Common myeloid progenitor, CD34-positive (primary cell): ENCODE measurements at regions of chr6 and their contacts with region 1.

Region 1: DNA sequence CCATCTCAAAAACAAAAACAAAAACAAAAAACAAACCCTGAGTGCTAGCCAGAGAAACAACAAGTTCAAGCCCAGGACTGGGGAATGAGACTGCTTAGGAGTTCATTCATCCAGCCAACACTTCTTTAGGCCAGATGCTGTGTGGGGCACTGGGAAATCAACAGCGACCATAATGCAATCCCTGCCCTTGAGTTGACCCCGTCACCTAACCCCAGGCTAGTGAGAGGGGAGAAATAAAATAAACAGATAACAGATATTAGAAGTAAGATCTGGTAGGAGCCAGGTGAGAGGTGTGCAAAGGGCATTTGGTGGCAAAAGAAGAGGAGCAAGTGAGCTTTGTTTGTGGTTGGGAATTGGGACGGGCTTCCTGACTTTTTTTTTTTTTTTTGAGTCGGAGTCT is 4.9 kb upstream of the RPL10A start:
- DNase-seq: no peak
- H3K4me3 ChIP-seq: no peak overlapping the region
- H3K27ac ChIP-seq: no peak overlapping the region
- H3K4me1 ChIP-seq: peaks cover 0 to 7% (median 5%) of the 10 kb centered on the region in 4 experiments
- H3K27me3 ChIP-seq: no peaks in the 10 kb centered on the region

Region 2: DNA sequence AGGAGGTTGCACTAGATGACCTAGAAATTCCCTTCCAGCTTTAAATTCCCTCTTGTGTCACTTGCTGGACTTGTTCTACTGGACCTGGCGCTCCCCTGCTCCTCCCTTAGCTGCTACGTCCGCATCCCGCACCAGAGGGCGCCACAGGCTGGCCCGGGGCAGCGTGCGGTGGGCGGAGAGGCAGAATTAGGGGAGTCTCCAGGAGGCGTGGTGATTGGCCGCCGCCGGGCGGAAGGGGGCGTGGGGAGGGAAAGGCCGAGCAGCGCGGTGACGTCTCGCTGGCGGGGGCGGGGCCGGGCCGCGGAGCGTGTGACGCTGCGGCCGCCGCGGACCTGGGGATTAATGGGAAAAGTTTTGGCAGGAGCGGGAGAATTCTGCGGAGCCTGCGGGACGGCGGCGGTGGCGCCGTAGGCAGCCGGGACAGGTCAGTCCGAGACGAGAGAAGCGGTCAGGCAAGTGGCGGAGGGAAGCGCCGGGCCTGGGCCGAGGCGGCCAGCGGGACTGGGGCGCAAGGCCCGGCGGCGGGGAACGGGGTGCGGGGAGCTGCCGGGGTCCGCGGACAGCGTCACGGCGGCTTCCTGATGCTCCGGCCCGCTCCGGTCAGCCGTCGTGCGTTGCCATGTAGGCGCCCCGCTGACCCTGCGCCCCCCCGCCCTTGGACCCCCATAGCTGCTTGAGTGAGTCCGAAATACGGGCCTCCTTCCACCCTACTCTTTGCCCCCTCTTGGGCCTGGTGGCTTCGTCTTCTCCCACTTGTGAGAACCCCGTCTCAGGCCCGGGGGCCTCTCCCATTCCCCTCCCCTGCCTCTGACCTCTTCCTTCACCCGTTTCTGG is 120.8 kb before region 1 on chr6 and contains the start of gene PPARD:
- CTCF ChIA-PET with region 1: interaction called, 11 read pairs
- POLR2A ChIA-PET with region 1: interaction called, 4 read pairs
- DNase-seq: peak; percentile 87 to 91 (median 88)
- H3K4me3 ChIP-seq: peak within 1 kb of the TSS; percentile 62 to 86 (median 74)
- H3K27ac ChIP-seq: peak within 1 kb of the TSS in 1 of 2 experiments; percentile 55
- H3K4me1 ChIP-seq: peaks cover 3 to 26% (median 13%) of the 10 kb centered on the region in 4 experiments
- H3K27me3 ChIP-seq: peaks cover 0 to 44% (median 31%) of the 10 kb centered on the region in 5 experiments